ENCODE measurements at regions of chr14 and their contacts with region 1.

Region 1: GRCh38 chr14:74762917-74763802 is at the start of gene YLPM1:
- DNase-seq: peak; percentile 94
- H3K4me3 Mint-ChIP-seq: peak within 1 kb of the TSS; percentile 94
- H3K27ac Mint-ChIP-seq: peak within 1 kb of the TSS; percentile 92
- H3K4me1 Mint-ChIP-seq: peaks cover 48% of the 10 kb centered on the region
- H3K27me3 Mint-ChIP-seq: no peaks in the 10 kb centered on the region
- total RNA-seq, gene YLPM1: 46.5 to 47.0 TPM

Region 2: GRCh38 chr14:74084277-74085046 is 678.7 kb before region 1 on chr14 and contains the starts of genes ALDH6A1 and LIN52:
- CTCF ChIA-PET with region 1: no interaction called
- intact Hi-C with region 1: loop called (anchors 1 kb)
- DNase-seq: peak; percentile 100
- H3K4me3 Mint-ChIP-seq: peak within 1 kb of the TSS; percentile 99
- H3K27ac Mint-ChIP-seq: peak within 1 kb of the TSS; percentile 95
- H3K4me1 Mint-ChIP-seq: peaks cover 38% of the 10 kb centered on the region
- H3K27me3 Mint-ChIP-seq: no peaks in the 10 kb centered on the region
- total RNA-seq, gene ALDH6A1: 24.0 to 25.3 TPM
- total RNA-seq, gene LIN52: 10.7 to 13.6 TPM

Region 3: DNA sequence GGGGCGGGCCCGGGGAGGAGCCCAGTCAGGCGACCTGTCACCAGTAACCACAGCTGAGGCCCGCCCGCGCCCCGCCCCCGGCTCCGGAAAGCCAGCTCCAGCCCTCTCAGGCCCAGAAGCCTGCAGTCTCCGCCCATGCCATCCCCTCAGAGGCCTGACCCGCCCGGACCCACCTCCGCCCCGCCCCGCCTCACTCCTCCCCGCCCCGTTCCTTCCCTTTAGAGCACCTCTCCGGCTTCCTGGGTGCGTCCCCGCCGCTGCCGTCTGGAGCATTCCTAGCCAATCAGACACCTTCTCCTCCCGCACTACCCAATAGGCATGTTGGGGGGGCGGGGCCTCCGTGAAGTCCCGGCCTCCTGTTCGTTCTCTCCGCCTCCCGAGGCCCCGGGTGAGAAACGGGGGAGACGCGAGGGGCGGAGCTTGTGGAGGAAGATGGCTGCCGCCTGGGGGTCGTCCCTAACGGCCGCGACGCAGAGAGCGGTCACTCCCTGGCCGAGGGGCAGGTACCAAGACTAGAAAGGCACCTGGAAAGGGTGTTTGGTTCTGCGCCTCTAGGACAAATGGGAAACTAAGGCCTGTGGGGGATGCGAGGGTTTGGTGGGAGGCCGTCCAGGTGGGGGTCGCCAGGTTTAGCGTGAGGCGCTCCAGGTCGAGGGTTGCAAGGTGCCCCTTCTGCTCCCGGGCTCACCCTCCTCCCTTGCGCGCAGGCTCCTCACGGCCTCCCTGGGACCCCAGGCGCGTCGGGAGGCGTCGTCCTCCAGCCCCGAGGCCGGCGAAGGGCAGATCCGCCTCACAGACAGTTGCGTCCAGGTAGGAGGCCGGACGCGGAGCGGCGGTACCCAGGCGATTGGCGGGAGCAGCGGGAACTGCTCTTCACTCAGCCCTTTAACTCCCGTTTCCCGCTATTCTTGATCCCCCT is 269.6 kb before region 1 on chr14 and contains the start of gene ISCA2:
- CTCF ChIA-PET with region 1: no interaction called
- intact Hi-C with region 1: loop called (anchors 1 kb)
- DNase-seq: peak; percentile 100
- H3K4me3 Mint-ChIP-seq: no peak within 1 kb of the TSS
- H3K27ac Mint-ChIP-seq: peak within 1 kb of the TSS; percentile 86
- H3K4me1 Mint-ChIP-seq: peaks cover 25% of the 10 kb centered on the region
- H3K27me3 Mint-ChIP-seq: no peaks in the 10 kb centered on the region
- total RNA-seq, gene ISCA2: 27.7 to 30.9 TPM

Region 4: DNA sequence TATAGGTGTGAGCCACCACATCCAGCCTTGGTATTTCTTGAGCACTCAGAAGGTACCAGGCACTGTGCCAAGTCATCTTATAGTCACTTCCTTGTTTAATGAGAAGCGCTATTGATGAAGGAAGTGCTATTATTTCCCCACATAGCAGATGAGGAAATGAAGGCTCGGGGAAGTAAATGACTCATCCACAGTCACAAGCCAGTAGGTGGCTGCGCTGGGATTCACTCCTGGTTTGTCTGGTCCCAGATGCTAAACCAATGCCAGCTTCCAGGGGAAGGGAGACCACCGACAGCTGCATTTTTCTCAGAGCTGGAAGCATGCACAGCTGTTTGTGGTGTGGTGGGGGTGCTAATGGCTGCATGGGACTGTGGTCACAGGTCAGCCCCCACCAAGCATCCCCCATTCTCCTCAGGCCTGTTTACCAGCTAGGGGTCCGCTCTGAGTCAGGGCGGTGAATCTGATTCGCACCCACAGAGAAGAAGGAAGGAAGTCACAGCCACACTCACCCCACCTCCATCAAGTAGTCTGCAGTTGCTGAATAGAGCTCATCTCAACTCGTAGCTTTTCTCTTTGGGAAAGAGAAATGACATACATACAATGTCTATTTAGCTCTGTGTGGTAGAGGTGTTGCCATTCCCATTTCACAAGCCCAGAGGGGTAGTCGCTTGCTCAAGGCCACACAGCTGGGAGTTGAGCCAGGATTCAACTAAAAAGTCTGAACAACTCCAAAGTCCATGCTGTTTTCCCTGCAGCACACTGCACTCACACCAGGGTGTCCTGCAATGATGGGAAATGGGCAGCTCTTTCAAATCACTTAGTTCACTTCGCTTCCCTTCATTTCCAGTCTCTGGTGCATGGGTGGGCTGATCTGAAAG is 144.8 kb before region 1 on chr14:
- CTCF ChIA-PET with region 1: no interaction called
- intact Hi-C with region 1: loop called (anchors 1 kb)
- DNase-seq: peak; percentile 89
- H3K4me3 Mint-ChIP-seq: no peak overlapping the region
- H3K27ac Mint-ChIP-seq: peak overlapping the region; percentile 63
- H3K4me1 Mint-ChIP-seq: peaks cover 62% of the 10 kb centered on the region
- H3K27me3 Mint-ChIP-seq: peaks cover 4% of the 10 kb centered on the region

Region 5: DNA sequence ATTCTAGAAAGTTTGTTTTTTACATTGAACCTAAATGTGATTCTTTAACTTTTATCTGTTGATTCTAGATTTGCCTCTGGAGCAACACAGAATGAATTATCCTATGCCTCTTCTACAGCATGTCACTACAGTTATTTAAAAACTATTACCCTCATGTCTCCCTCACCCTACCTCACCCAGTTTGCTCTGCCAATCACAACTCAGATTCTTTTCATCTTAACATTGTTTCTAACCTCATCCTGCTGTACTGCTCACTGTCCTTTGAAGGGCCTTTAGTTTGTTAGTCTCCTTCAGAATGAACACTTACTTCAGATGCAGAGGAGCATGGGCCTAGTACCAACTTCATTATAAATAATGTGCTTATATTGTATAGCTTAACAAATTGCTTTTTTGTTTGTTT is 21.5 kb after region 1 on chr14:
- CTCF ChIA-PET with region 1: interaction called, 6 read pairs
- intact Hi-C with region 1: loop called (anchors 2 kb)
- DNase-seq: no peak
- H3K4me3 Mint-ChIP-seq: no peak overlapping the region
- H3K27ac Mint-ChIP-seq: peak overlapping the region; percentile 24
- H3K4me1 Mint-ChIP-seq: peaks cover 23% of the 10 kb centered on the region
- H3K27me3 Mint-ChIP-seq: no peaks in the 10 kb centered on the region

Region 6: GRCh38 chr14:74841230-74842207 is 78.4 kb after region 1 on chr14:
- CTCF ChIA-PET with region 1: interaction called, 6 read pairs
- intact Hi-C with region 1: loop called (anchors 1 kb)
- DNase-seq: peak; percentile 46
- H3K4me3 Mint-ChIP-seq: no peak overlapping the region
- H3K27ac Mint-ChIP-seq: peak overlapping the region; percentile 54
- H3K4me1 Mint-ChIP-seq: peaks cover 54% of the 10 kb centered on the region
- H3K27me3 Mint-ChIP-seq: no peaks in the 10 kb centered on the region

Region 7: DNA sequence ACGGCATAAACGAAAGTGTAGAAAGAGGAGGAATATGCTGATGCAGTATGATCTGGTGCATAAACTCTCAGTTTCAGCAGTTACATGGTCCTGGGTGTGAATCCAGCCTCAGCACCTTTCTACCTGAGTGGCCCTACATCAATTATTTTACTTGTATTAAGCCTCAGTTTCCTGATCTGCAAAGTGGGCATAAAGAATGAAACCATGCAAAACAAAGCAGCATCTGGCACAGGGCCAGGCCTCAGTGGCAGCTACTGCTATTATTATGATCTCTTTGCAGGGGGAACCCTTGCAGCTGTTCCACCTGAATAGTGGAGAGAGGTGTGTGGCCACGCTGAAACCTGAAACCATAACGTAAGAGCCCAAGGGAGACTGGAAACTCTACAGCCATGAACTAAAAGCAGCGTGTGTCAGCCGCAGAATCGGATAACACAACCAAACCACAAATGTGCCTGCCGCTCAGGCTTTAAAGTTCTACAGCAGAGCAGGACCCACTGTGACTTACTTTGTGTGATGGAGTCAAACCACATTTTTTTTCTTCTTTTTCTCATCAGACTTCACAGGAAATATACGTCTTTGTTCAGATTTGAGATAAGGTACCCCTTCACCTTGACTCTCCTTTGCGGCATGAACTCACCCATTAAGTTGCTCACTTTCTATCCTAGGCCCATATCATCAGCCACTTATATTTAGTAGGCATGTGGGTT is 486.2 kb after region 1 on chr14:
- CTCF ChIA-PET with region 1: no interaction called
- intact Hi-C with region 1: loop called (anchors 1 kb)
- DNase-seq: peak; percentile 90
- H3K4me3 Mint-ChIP-seq: no peak overlapping the region
- H3K27ac Mint-ChIP-seq: peak overlapping the region; percentile 66
- H3K4me1 Mint-ChIP-seq: peaks cover 54% of the 10 kb centered on the region
- H3K27me3 Mint-ChIP-seq: no peaks in the 10 kb centered on the region

Measured in activated naive CD4-positive, alpha-beta T cell treated with anti-CD3 and anti-CD28 coated beads for 36 hours (primary cell).